ENCODE measurements at regions of chr5 and their contacts with region 1.

Region 1: DNA sequence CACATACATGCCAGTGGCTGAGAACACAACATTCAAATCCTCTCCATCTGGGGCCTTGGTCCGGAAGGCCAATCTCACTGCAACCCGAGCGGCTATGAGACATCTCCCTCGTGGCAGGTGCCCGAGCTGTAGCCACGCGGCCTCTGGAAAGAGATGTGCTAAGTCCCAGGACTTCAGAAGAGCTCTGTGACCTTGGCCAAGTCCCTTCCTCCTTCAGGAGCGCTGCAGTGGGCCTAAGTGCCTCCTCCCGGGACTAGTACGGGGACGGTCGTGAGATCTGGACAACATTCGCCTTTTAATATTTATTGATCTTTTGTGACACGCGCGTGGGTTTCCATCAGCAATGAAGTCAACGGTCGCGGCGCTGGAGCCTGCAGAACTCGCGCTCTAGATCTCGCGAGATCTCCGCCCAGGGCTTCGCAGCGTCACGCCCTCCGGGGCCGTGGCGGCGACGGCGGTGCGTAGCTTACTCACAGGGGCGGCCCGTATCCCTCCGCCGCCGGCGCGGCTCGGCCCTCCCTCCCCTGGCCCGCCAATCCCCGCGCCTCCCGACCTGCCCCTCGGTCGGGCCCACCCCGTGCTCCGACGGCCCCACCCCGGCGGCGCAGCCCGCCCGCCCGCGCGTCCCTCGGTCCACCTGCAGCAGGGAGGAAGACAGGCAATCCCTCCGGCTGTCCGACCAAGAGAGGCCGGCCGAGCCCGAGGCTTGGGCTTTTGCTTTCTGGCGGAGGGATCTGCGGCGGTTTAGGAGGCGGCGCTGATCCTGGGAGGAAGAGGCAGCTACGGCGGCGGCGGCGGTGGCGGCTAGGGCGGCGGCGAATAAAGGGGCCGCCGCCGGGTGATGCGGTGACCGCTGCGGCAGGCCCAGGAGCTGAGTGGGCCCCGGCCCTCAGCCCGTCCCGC is at the start of gene UBE2D2:
- DNase-seq: peak; percentile 98
- H3K4me3 Mint-ChIP-seq: peak within 1 kb of the TSS; percentile 95
- H3K27ac Mint-ChIP-seq: peak within 1 kb of the TSS; percentile 95
- H3K4me1 Mint-ChIP-seq: peaks cover 36% of the 10 kb centered on the region
- H3K27me3 Mint-ChIP-seq: no peaks in the 10 kb centered on the region
- total RNA-seq, gene UBE2D2: 241 to 244 TPM

Region 2: DNA sequence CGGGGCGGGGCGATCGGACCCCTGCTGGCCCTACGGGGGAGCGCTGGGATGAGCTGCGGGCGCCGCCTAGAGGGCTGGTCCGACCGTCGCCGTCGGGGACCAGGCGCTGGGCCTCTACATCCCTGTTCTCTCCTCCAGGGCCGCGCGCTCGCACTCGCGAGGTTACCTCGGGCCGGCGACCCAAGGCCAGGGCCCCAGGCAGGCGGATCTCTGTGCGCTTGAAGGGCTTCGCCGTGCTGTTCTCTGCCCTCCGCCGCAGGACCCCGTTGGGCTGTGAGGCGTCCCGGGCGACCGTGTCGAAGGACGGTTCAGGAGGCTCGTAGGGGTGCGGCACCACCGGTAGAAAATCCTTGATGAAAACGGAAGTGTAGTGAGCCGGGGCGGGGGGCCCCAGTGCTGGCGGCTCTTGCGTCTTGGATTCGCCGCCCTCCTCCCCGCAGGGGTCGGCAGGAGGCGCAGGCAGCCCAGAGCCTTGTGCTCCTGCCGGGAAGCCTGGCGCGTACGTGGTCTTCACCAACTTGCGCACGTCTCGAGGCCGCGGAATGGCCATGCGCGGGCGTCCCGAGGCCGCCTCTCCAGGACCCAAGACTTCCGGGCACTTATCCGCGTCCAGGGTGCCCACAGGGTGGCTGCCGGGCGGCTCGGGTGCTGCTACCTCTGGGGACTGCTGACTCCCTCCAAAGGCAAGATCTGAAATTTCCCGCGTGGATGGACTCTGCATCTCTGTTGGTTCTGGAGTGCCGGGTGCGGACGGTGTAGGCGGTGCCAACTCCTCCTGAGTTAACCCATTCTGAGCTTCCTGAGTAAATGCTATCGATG is 168.1 kb before region 1 on chr5:
- CTCF ChIA-PET with region 1: interaction called, 4 read pairs
- POLR2A ChIA-PET with region 1: interaction called, 15 read pairs
- DNase-seq: peak; percentile 92
- H3K4me3 Mint-ChIP-seq: peak overlapping the region; percentile 99
- H3K27ac Mint-ChIP-seq: peak overlapping the region; percentile 90
- H3K4me1 Mint-ChIP-seq: peaks cover 65% of the 10 kb centered on the region
- H3K27me3 Mint-ChIP-seq: no peaks in the 10 kb centered on the region

Region 3: DNA sequence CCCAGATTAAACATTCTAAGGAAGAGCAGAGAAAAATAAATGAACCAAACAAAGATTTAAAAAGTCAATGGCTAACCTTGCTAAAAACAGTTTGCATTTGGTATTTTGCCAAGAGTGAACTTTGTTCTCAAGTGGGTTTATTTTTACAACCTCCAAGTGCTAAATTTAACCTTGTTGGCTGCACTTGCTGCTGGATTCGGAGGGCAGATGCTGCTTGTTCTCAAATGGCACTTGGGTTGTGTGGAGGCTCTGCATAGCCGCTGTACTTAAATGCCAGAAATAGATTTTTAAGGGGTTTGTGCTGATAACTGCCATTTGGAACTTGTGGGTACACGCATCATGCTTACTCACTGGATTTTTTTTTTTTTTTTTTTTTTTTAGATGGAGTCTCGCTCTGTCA is 143.8 kb before region 1 on chr5:
- CTCF ChIA-PET with region 1: interaction called, 7 read pairs
- POLR2A ChIA-PET with region 1: interaction called, 32 read pairs
- DNase-seq: no peak
- H3K4me3 Mint-ChIP-seq: no peak overlapping the region
- H3K27ac Mint-ChIP-seq: peak overlapping the region; percentile 93
- H3K4me1 Mint-ChIP-seq: peaks cover 83% of the 10 kb centered on the region
- H3K27me3 Mint-ChIP-seq: no peaks in the 10 kb centered on the region

Region 4: DNA sequence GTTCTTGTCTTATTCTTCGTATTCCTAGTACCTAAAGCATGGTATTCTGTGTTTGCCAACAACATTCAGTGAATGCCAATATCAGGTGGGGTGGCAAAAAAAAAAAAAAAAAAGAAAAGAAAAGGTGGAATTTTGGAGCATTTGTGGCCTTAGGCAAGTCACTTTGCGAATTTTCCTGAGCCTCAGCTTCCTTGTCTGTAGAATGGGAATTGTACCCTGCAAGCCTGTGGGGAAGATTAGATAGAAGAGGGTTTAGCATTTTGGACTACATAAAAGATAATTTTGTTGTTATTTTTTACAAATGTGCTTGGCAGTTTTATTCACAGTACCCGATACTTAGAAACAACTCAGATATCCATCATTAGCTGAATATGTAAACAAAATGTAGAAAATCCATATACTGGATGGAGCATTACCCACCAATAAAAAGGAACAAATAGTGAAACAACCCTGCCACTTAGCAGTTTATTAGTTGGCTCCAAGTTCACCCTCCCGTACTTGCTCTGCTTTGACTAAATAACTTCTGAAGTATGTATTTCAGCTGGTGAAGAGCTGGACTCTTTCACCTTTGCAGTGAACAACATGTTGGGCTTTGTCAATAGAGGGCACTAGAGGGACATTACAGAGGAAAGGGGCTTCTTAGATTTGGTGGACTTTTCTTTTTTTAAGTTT is 13.8 kb after region 1 on chr5:
- CTCF ChIA-PET with region 1: interaction called, 55 read pairs
- POLR2A ChIA-PET with region 1: interaction called, 109 read pairs
- DNase-seq: no peak
- H3K4me3 Mint-ChIP-seq: no peak overlapping the region
- H3K27ac Mint-ChIP-seq: peak overlapping the region; percentile 53
- H3K4me1 Mint-ChIP-seq: peaks cover 69% of the 10 kb centered on the region
- H3K27me3 Mint-ChIP-seq: no peaks in the 10 kb centered on the region